Activated T-helper 1 cell treated with anti-CD3 and anti-CD28 coated beads, Interleukin-12 subunit alpha, Interleukin-12 subunit beta, Interleukin-2, Interleukin-4 antibody, amounts not matched to agents 30 ng/mL and 10 ng/mL and 1 ng/mL, durations not matched to agents 14 hours and 24 hours and 36 hours (primary cell): ENCODE measurements at regions of chr2 and their contacts with region 1.

Region 1: DNA sequence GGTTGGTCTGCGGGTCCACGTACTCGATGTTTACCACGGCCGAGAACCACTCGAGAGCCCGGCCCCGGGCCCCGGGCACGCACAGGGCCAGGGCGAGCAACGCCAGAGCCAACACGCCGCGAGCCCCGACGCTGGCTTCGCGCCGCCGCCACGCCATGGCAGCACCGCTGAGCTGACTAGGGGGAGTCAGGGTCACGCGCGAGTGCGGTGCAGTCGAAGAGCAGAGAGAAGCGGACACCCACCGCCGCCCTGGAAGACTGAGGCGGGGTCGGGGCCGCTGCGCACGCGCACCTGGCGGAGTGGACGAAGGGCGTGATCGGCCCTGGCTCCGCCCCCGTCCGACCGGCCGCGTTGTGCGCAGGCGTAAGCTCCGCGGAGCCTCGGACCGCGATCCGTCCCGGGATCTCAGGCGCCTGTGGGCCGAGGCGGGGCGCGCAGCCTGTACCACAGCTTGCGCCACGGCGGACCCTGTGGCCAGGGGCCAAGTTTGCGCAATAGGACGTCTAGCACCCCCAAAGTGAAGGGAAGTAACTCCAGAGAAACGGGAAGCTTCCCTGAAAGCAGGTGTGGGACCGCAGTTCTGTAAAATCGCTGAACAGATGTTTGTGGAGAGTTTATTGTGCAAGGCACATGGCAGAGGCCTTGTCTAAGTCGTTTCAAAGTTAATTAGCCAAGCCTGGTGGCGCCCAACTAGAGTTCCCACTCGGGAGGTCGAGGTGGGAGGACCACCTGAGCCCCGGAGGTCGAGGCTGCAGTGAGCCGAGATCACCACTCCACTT is at the start of gene RNF149:
- DNase-seq: peak; percentile 91
- H3K4me3 Mint-ChIP-seq: peak within 1 kb of the TSS; percentile 92
- H3K27ac Mint-ChIP-seq: peak within 1 kb of the TSS; percentile 96
- H3K4me1 Mint-ChIP-seq: peaks cover 65% of the 10 kb centered on the region
- H3K27me3 Mint-ChIP-seq: peaks cover 2% of the 10 kb centered on the region
- total RNA-seq, gene RNF149: 54.8 and 55.9 TPM in 2 replicates

Region 2: DNA sequence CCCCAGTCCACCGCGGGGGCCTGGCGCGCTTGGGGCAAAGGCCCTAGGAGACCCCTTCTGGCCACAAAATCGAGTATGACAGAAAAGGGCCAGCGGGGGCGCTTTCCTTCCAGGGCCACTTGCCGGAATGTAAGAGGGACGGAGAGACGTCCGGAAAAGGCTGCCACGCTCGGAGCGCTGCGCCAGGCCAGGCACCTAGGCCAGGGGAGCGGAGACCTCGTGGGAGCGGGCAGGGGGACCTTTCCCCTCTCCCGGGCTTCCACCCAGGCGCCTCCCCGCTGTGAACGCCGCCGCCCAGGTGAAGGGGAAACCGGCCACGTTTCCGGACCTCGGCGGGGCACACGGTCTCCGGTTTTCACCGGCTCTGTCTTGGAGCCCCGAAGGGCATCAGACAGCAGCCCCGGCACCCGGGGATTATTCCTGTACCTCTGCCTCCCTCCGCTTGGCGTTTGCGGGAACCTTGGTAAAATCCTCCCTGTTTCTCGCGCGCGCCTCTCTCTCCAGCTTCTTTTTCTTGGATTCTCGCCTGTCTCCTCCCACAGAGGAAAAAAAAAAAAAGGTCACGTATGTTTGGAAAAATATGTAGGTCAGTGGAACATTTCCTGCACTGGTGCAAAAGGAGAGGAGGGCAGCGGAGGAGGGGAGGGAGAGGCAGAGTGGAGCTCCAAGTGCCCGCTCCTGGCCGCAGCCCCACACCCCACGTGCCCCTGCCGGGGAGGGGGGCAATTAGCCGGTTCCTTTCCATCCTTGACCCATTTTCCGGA is 489.8 kb before region 1 on chr2:
- intact Hi-C with region 1: loop called (anchors 10 kb)
- DNase-seq: no peak
- H3K4me3 Mint-ChIP-seq: peak overlapping the region; percentile 77
- H3K27ac Mint-ChIP-seq: no peak overlapping the region
- H3K4me1 Mint-ChIP-seq: peaks cover 26% of the 10 kb centered on the region
- H3K27me3 Mint-ChIP-seq: peaks cover 47% of the 10 kb centered on the region

Region 3: GRCh38 chr2:101252408-101253012 is 56.1 kb before region 1 on chr2 and contains the start of gene CNOT11:
- intact Hi-C with region 1: loop called (anchors 1 kb)
- DNase-seq: peak; percentile 97
- H3K4me3 Mint-ChIP-seq: peak within 1 kb of the TSS; percentile 99
- H3K27ac Mint-ChIP-seq: peak within 1 kb of the TSS; percentile 98
- H3K4me1 Mint-ChIP-seq: peaks cover 57% of the 10 kb centered on the region
- H3K27me3 Mint-ChIP-seq: no peaks in the 10 kb centered on the region
- total RNA-seq, gene CNOT11: 70.6 and 74.7 TPM in 2 replicates

Region 4: GRCh38 chr2:101278925-101279324 is 29.7 kb before region 1 on chr2:
- intact Hi-C with region 1: no loop called
- DNase-seq: no peak
- H3K4me3 Mint-ChIP-seq: no peak overlapping the region
- H3K27ac Mint-ChIP-seq: no peak overlapping the region
- H3K4me1 Mint-ChIP-seq: peaks cover 23% of the 10 kb centered on the region
- H3K27me3 Mint-ChIP-seq: peaks cover 1% of the 10 kb centered on the region

Region 5: DNA sequence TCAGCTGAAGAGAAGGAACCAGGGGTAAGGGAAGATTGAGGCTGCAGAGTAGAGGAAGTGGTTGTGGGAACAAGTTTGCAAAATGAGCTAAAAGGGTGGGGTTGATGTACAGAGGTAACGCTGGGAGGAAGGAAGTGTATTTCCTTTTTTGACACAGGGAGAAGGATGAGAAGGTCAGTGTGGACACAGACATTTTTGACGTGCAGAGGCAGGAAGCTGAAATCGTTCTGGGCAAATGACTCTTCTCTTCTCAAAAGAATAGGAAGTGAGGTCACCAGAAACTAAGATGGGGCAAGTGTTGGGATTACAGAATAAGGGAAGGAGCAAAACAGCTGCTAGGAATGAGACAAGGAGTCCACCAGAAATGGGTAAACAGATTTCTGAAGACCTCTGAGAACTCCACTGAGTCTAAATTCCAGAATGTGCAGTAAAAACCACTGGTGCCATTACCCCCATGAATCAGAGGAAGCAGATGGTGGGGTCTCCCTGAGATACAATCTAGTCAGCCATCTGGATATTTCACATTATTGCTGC is 19.9 kb after region 1 on chr2:
- intact Hi-C with region 1: loop called (anchors 1 kb)
- DNase-seq: peak; percentile 61
- H3K4me3 Mint-ChIP-seq: no peak overlapping the region
- H3K27ac Mint-ChIP-seq: no peak overlapping the region
- H3K4me1 Mint-ChIP-seq: peaks cover 11% of the 10 kb centered on the region
- H3K27me3 Mint-ChIP-seq: no peaks in the 10 kb centered on the region

Region 6: DNA sequence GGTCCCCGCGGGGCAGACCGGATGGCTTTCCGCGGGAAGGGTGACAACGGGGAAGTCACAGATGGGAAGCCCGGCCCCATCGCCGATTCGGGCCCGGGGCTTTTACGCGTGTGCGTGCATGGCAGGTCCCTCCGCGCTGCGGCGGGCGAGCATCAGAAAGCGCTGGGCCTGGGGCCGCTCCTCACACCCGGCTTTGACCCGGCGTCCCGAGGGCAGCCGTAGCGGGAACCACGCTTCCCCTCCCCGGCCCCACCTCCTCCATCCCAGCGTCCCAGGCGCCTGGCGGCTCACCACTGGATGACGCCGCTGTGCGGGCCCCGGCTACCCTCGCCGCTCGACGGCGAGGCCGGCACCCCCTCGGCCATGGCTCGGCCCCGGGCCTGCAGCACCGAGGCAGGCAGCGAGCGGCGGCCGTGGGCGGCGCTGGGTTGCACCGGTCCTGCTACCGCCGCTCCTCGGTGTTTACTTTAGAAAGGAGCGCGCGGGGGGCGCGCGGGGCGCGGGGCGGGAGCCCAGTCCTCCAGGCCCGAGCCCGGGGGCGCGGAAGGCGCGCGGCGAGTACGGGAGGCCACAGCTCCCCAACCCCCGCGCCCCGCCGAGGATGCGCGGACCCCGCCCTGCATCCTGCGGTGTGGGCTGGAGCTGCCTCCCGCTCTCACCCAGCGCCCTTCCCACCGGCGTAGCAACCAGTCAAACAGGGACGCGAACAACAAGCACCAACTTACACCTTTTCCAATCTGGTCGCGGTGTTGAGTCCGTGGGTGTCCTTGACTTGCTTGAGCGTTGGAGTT is 165.5 kb after region 1 on chr2:
- intact Hi-C with region 1: loop called (anchors 1 kb)
- DNase-seq: peak; percentile 52
- H3K4me3 Mint-ChIP-seq: peak overlapping the region; percentile 84
- H3K27ac Mint-ChIP-seq: peak overlapping the region; percentile 86
- H3K4me1 Mint-ChIP-seq: peaks cover 62% of the 10 kb centered on the region
- H3K27me3 Mint-ChIP-seq: no peaks in the 10 kb centered on the region

Region 7: DNA sequence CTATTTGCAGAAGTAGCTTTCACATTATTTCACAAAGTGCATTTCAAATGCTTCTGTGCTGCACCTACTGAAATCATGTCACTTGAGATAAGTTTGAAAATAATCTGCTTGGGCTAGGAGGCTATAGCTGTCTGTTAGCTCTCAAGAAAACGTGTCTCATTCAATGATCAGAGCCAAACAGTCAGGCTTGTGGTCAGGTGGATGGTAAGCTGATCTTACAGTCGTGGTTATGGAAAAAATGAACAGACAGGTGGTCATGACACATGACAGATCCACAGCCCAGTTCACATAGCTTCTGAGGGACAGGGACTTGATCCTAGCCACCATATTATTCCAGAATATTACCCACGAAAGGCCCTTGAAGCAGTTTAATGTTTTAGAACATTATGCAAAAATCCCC is 192.8 kb after region 1 on chr2:
- intact Hi-C with region 1: no loop called
- DNase-seq: no peak
- H3K4me3 Mint-ChIP-seq: no peak overlapping the region
- H3K27ac Mint-ChIP-seq: peak overlapping the region; percentile 14
- H3K4me1 Mint-ChIP-seq: peaks cover 22% of the 10 kb centered on the region
- H3K27me3 Mint-ChIP-seq: no peaks in the 10 kb centered on the region

Region 8: DNA sequence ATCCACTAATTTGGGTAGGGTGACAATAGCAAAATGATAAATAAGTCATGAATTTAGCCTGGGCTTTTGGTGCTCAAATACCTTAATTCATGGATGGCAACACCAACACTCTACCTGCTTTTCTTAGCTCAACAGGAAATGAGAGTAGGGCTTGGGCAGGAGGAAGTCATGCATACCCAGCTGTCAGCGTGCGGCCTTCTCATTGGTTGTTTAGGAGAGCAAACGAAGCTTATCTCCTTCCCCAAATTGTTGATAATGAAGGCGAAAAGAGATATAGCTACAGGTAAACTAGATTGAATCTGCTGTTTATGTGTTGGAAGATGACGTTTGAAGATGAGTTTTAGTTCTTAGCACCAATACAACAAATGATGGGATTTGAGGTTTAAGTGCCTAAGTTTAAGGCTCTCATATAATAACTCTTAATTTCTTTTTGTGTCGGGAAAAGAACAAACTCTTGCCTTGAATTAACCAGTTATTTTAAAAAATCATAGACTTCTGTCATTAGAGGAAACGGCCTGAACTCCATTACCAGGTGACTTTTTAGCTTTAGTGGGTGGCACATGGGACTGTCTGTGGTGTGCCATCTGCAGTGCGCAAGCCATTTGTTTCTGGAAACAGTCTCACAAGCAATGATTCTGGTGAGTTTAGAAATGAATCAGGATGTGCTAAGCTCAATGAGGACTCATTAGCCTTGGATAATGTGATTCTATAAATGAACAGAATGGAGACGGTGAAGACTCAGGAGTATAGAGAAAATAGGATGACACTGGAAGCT is 408.6 kb after region 1 on chr2:
- intact Hi-C with region 1: loop called (anchors 1 kb)
- DNase-seq: no peak
- H3K4me3 Mint-ChIP-seq: peak overlapping the region; percentile 59
- H3K27ac Mint-ChIP-seq: peak overlapping the region; percentile 90
- H3K4me1 Mint-ChIP-seq: peaks cover 71% of the 10 kb centered on the region
- H3K27me3 Mint-ChIP-seq: no peaks in the 10 kb centered on the region

Region 9: GRCh38 chr2:102436323-102436722 is 1127.7 kb after region 1 on chr2:
- intact Hi-C with region 1: loop called (anchors 5 kb)
- DNase-seq: no peak
- H3K4me3 Mint-ChIP-seq: peak overlapping the region; percentile 53
- H3K27ac Mint-ChIP-seq: peak overlapping the region; percentile 86
- H3K4me1 Mint-ChIP-seq: peaks cover 33% of the 10 kb centered on the region
- H3K27me3 Mint-ChIP-seq: no peaks in the 10 kb centered on the region